PC-3 (cell line): ENCODE measurements at regions of chr3 and their contacts with region 1.

Region 1: DNA sequence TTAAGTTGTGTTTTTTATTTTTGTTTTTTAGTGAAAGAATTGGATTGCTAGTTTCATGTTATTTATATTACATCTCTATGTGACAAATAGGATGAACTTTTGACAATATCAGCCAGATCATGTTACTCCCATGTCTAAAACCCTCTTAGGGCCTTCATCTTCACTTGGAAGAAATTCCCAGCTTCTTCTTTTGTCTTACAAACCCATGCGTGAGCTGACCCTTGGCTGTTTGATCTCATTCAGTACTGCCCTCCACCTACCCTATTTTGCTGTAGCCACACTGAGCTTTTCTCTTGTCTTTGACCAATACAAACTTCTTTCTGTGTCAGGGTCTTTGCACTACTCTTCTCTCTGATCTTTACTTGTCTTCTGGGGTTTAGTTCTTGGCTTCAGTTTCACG is 37.0 kb downstream of the RBM6 start:
- DNase-seq: no peak
- ATAC-seq: no peak
- H3K4me3 ChIP-seq: no peak overlapping the region
- H3K27ac ChIP-seq: no peak overlapping the region
- H3K4me1 ChIP-seq: no peaks in the 10 kb centered on the region
- H3K27me3 ChIP-seq: no peaks in the 10 kb centered on the region
- CTCF ChIP-seq: no peak

Region 2: DNA sequence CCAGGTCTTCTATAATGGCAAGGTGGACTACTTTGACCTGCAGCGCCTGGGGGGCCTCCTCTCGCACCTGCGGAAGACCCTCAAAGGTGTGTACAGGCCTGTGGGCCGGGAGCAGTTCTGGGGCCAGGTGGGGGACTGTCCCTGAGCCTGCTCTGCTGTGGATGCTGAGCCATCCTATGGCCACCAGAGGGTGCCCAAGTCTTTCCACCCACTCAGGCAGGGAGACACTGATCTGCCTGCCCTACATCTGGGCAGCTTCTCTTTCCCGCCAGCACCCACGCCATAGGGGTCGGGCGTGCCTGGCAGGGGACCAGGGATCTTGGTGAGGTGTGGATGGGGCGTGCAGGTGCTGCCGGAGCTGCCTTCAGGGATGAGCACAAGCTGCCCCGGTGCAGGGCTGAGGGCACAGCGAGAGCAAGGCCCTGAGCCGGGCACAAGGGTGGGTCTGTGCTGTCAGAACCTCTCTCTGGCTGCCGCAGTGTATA is 273.5 kb before region 1 on chr3:
- CTCF ChIA-PET with region 1: interaction called, 10 read pairs
- POLR2A ChIA-PET with region 1: no interaction called
- intact Hi-C with region 1: no loop called
- DNase-seq: peak; percentile 81
- ATAC-seq: peak; percentile 88
- H3K4me3 ChIP-seq: no peak overlapping the region
- H3K27ac ChIP-seq: no peak overlapping the region
- H3K4me1 ChIP-seq: no peaks in the 10 kb centered on the region
- H3K27me3 ChIP-seq: no peaks in the 10 kb centered on the region
- CTCF ChIP-seq: peak; percentile 85

Region 3: DNA sequence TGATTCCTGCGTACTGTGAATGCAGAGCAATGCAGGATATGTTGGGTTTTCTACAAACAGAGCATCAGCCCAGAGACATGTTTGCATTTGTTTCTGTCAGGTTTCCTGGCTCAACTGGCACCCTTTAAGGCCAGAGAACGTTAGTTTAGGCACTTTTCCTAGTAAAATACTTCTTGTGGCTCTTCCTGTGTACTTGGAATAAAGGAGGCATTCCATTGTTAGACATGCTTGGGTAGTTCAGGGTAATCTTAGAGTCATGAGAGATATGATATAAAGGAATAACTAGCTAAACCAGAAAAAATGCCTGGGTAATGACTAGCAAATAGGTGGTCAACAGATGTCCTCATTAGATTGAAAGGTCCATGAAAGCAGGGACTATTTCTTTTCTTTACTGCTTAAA is 51.4 kb after region 1 on chr3:
- CTCF ChIA-PET with region 1: no interaction called
- POLR2A ChIA-PET with region 1: no interaction called
- intact Hi-C with region 1: no loop called
- DNase-seq: peak; percentile 47
- ATAC-seq: peak; percentile 24
- H3K4me3 ChIP-seq: no peak overlapping the region
- H3K27ac ChIP-seq: no peak overlapping the region
- H3K4me1 ChIP-seq: no peaks in the 10 kb centered on the region; the same call in 1 of the 2 replicates
- H3K27me3 ChIP-seq: no peaks in the 10 kb centered on the region
- CTCF ChIP-seq: no peak